ENCODE measurements at regions of chr1 and their contacts with region 1.

Region 1: GRCh38 chr1:92298573-92299476 is at the starts of genes GLMN and RPAP2:
- DNase-seq: peak; percentile 89
- ATAC-seq: peak; percentile 100
- total RNA-seq, gene GLMN: 4.8 TPM
- total RNA-seq, gene RPAP2: 20.4 TPM

Region 2: GRCh38 chr1:91924146-91924545 is 374.7 kb before region 1 on chr1:
- intact Hi-C with region 1: loop called (anchors 10 kb)
- DNase-seq: no peak
- ATAC-seq: no peak

Region 3: GRCh38 chr1:92066321-92066720 is 232.5 kb before region 1 on chr1:
- intact Hi-C with region 1: no loop called
- DNase-seq: no peak
- ATAC-seq: no peak